ENCODE measurements at regions of chr12 and their contacts with region 1.

Region 1: GRCh38 chr12:12562585-12563261 is at the start of gene DUSP16:
- DNase-seq: peak; percentile 96
- H3K4me3 Mint-ChIP-seq: peak within 1 kb of the TSS; percentile 88
- H3K27ac Mint-ChIP-seq: peak within 1 kb of the TSS; percentile 96
- H3K4me1 Mint-ChIP-seq: peaks cover 29% of the 10 kb centered on the region
- H3K27me3 Mint-ChIP-seq: no peaks in the 10 kb centered on the region
- total RNA-seq, gene DUSP16: 48.3 and 51.2 TPM in 2 replicates

Region 2: GRCh38 chr12:12376646-12377448 is 185.9 kb before region 1 on chr12:
- intact Hi-C with region 1: loop called (anchors 1 kb)
- DNase-seq: peak; percentile 79
- H3K4me3 Mint-ChIP-seq: no peak overlapping the region
- H3K27ac Mint-ChIP-seq: peak overlapping the region; percentile 35
- H3K4me1 Mint-ChIP-seq: peaks cover 23% of the 10 kb centered on the region
- H3K27me3 Mint-ChIP-seq: no peaks in the 10 kb centered on the region

Region 3: GRCh38 chr12:12474931-12475795 is 87.6 kb before region 1 on chr12:
- intact Hi-C with region 1: loop called (anchors 1 kb)
- DNase-seq: peak; percentile 90
- H3K4me3 Mint-ChIP-seq: peak overlapping the region; percentile 78
- H3K27ac Mint-ChIP-seq: peak overlapping the region; percentile 100
- H3K4me1 Mint-ChIP-seq: peaks cover 59% of the 10 kb centered on the region
- H3K27me3 Mint-ChIP-seq: no peaks in the 10 kb centered on the region

Region 4: GRCh38 chr12:12505544-12506495 is 56.9 kb before region 1 on chr12:
- intact Hi-C with region 1: loop called (anchors 1 kb)
- DNase-seq: peak; percentile 78
- H3K4me3 Mint-ChIP-seq: peak overlapping the region; percentile 64
- H3K27ac Mint-ChIP-seq: peak overlapping the region; percentile 94
- H3K4me1 Mint-ChIP-seq: peaks cover 63% of the 10 kb centered on the region
- H3K27me3 Mint-ChIP-seq: peaks cover 1% of the 10 kb centered on the region

Region 5: DNA sequence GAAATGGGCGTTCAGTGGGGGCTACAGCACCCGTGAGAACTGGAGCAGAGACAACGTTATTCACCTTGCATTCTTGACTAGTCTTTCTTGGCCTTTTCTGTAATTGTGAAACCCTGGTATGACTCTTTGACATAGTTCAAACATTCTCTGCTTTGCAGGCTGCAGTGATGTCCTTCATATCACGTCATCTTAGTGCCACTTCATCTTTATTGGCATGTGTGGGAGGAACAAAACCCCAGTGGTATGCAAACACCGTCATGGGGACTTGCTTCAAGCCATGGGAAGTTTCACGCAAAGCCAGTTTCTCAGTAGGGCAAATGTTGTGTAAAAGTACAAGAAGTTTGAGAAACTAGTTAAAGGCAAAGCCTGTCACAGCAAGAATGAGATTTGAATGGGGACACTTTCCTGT is 20.2 kb after region 1 on chr12:
- intact Hi-C with region 1: loop called (anchors 1 kb)
- DNase-seq: peak; percentile 78
- H3K4me3 Mint-ChIP-seq: peak overlapping the region; percentile 15
- H3K27ac Mint-ChIP-seq: peak overlapping the region; percentile 79
- H3K4me1 Mint-ChIP-seq: peaks cover 36% of the 10 kb centered on the region
- H3K27me3 Mint-ChIP-seq: no peaks in the 10 kb centered on the region

Region 6: GRCh38 chr12:12661086-12661485 is 98.4 kb after region 1 on chr12:
- intact Hi-C with region 1: loop called (anchors 1 kb)
- DNase-seq: no peak
- H3K4me3 Mint-ChIP-seq: no peak overlapping the region
- H3K27ac Mint-ChIP-seq: no peak overlapping the region
- H3K4me1 Mint-ChIP-seq: peaks cover under 1% of the 10 kb centered on the region
- H3K27me3 Mint-ChIP-seq: no peaks in the 10 kb centered on the region

Region 7: GRCh38 chr12:12724661-12725545 is 162.2 kb after region 1 on chr12:
- intact Hi-C with region 1: loop called (anchors 2 kb)
- DNase-seq: peak; percentile 96
- H3K4me3 Mint-ChIP-seq: peak overlapping the region; percentile 85
- H3K27ac Mint-ChIP-seq: peak overlapping the region; percentile 98
- H3K4me1 Mint-ChIP-seq: peaks cover 43% of the 10 kb centered on the region
- H3K27me3 Mint-ChIP-seq: peaks cover 3% of the 10 kb centered on the region